CD8-positive, alpha-beta T cell (primary cell): ENCODE measurements at regions of chr1 and their contacts with region 1.

Region 1: DNA sequence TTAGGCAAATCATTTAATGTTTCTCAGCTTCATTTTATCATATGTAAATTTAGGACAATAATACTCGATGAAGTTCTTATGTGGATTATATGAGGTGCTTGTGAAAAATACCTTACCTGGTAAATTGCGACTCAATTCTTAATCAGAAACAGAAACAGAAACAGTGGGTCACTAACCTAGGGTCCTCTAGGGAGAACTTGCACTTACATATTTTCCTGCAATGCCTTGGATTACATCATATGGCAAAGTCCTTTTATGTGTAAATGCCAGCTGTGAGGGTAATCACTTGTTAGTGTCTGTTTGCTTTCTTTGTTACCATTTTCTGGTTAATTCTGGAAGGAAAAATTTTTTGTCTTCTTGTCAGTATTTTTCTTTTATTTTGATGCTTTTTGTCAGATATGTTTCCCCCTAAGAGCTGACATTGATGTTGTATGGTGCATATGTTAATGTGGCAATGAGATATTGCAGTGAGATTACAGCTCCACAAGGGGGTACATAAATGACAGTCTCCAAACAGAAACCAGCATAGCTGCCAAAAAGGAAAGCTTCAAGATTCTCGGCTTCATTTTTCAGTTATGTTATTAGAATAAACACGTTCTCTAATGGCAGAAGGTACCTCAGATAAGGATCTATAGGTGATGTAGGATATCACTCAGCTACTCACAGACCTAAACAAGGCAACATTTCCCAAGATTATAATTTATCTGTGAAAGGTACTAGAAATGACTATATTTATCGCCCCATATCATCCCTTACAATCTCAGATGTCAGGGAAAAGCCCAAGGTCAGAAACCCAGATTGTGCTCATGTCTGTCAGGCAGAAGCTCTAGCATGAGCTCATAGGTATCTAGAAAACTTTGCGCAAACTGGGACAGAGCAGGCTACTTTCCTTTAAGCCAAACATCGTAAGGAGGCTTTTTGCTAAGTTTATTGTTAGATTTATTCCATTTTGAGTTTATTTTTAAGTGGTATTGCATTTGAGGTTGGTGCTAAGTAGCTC is 119.9 kb downstream of the FASLG start:
- DNase-seq: peak in 2 of 9 experiments; percentile 38 to 51
- ATAC-seq: peak; percentile 78
- H3K4me3 ChIP-seq: peak overlapping the region in 1 of 2 experiments; percentile 28
- H3K4me3 Mint-ChIP-seq: peak overlapping the region; percentile 70
- H3K27ac ChIP-seq: no peak overlapping the region
- H3K27ac Mint-ChIP-seq: peak overlapping the region; percentile 25
- H3K4me1 ChIP-seq: no peaks in the 10 kb centered on the region
- H3K4me1 Mint-ChIP-seq: peaks cover 18% of the 10 kb centered on the region
- H3K27me3 ChIP-seq: no peaks in the 10 kb centered on the region
- H3K27me3 Mint-ChIP-seq: no peaks in the 10 kb centered on the region
- CTCF ChIP-seq: peak; percentile 44

Region 2: DNA sequence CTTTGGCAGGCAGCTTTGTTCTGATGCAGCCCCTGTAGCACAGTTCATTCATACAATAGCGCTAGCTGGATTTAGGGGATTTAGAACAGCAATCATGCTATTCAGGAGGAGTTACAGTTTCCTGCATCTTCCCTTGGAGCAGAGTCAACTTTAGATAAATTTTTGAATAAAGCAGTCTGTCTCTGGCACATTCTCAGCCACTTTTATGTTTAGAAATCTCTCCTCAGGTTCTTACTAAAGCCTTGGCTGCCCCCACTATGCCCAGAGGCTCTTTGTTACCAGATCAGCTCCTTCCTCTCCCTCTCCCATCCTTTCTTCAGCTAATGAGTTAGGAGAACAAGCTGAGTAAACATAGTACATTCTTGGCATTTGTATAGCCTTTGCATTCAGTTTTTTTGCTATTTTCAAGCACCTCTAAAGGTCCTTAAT is 317.9 kb before region 1 on chr1:
- CTCF ChIA-PET with region 1: no interaction called
- POLR2A ChIA-PET with region 1: no interaction called
- intact Hi-C with region 1: no loop called
- DNase-seq: no peak
- ATAC-seq: no peak
- H3K4me3 ChIP-seq: no peak overlapping the region
- H3K4me3 Mint-ChIP-seq: no peak overlapping the region
- H3K27ac ChIP-seq: no peak overlapping the region
- H3K27ac Mint-ChIP-seq: no peak overlapping the region
- H3K4me1 ChIP-seq: no peaks in the 10 kb centered on the region
- H3K4me1 Mint-ChIP-seq: no peaks in the 10 kb centered on the region
- H3K27me3 ChIP-seq: peaks cover 0 to 3% of the 10 kb centered on the region in 2 experiments
- H3K27me3 Mint-ChIP-seq: no peaks in the 10 kb centered on the region
- CTCF ChIP-seq: no peak

Region 3: DNA sequence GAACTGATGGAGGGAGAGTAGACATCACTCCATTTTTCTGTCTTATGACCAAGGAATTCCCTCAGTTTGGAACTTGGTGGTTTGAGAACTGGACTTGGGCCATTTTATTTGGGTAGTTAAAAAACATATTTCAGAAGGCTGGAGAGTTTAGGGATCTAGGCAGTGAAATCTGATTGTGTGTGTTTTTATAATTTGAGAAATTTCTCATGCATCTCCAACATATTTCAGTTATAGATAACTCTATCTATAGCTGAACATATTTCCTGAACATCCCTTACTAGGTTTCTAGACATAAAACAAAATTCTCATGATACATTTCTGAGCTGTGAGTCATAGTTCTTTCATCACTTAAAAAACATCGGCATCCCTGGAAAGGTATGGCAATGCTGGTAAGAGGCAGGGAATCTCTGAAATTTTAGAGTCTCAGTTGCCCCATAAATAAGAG is 17.2 kb before region 1 on chr1:
- CTCF ChIA-PET with region 1: interaction called, 10 read pairs
- POLR2A ChIA-PET with region 1: interaction called, 4 read pairs
- intact Hi-C with region 1: no loop called
- DNase-seq: no peak
- ATAC-seq: no peak
- H3K4me3 ChIP-seq: no peak overlapping the region
- H3K4me3 Mint-ChIP-seq: no peak overlapping the region
- H3K27ac ChIP-seq: no peak overlapping the region
- H3K27ac Mint-ChIP-seq: no peak overlapping the region
- H3K4me1 ChIP-seq: peaks cover 27% of the 10 kb centered on the region
- H3K4me1 Mint-ChIP-seq: peaks cover 35% of the 10 kb centered on the region
- H3K27me3 ChIP-seq: no peaks in the 10 kb centered on the region
- H3K27me3 Mint-ChIP-seq: no peaks in the 10 kb centered on the region
- CTCF ChIP-seq: no peak

Region 4: GRCh38 chr1:173202430-173203145 is 423.8 kb after region 1 on chr1:
- CTCF ChIA-PET with region 1: interaction called, 26 read pairs
- POLR2A ChIA-PET with region 1: no interaction called
- intact Hi-C with region 1: no loop called
- DNase-seq: peak in 2 of 9 experiments; percentile 41 to 54
- ATAC-seq: no peak
- H3K4me3 ChIP-seq: no peak overlapping the region
- H3K4me3 Mint-ChIP-seq: no peak overlapping the region
- H3K27ac ChIP-seq: no peak overlapping the region
- H3K27ac Mint-ChIP-seq: peak overlapping the region; percentile 3
- H3K4me1 ChIP-seq: peaks cover 40% of the 10 kb centered on the region
- H3K4me1 Mint-ChIP-seq: peaks cover 44% of the 10 kb centered on the region
- H3K27me3 ChIP-seq: no peaks in the 10 kb centered on the region
- H3K27me3 Mint-ChIP-seq: no peaks in the 10 kb centered on the region
- CTCF ChIP-seq: peak; percentile 39